Dorsolateral prefrontal cortex (tissue), 120 donors: ENCODE measurements at regions of chr4 and their contacts with region 1.

Region 1: DNA sequence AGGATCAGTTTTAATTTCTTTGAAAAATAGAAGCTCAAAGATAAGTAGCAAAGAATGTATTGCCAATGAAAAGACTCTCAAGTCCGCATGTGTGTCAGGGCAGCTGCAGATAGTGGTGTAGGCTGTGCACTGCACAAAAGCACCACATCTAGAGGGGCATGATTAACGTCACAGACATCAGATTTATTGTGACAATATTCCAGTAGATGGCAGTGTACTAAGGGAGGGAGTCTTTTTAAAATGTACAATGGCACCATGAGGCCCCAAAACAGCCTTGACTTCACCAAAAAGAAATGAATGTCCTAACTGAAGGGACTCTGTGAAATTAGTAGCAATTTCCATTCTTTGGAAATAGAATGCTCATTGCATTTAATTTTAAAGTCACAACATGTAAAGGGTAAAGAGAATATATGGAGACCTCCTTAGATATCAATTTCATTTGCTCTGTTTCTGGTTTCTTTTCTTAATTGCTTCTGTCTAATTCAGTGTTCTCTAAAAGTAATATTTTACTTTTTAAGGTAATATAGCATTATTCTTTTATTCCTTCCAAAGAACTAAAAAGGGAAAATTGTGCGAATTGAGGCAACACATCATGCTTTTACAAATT is 98.4 kb downstream of the ZNF827 start:
- DNase-seq: no peak
- H3K4me3 ChIP-seq: no peak overlapping the region
- H3K27ac ChIP-seq: peak overlapping the region in 16 of 59 donors; percentile 6 to 75 (median 54)
- H3K27me3 ChIP-seq: no peaks in the 10 kb centered on the region
- CTCF ChIP-seq: peak in 55 of 56 donors; percentile 11 to 74 (median 56)

Region 2: GRCh38 chr4:145881989-145882388 is 41.7 kb after region 1 on chr4:
- intact Hi-C with region 1: loop called in 1 of 2 experiments (anchors 5 kb)
- DNase-seq: peak in 1 of 10 donors; percentile 42
- H3K4me3 ChIP-seq: peak overlapping the region in 14 of 59 donors; percentile 6 to 40 (median 21)
- H3K27ac ChIP-seq: peak overlapping the region; percentile 58 to 97 (median 91)
- H3K27me3 ChIP-seq: no peaks in the 10 kb centered on the region
- CTCF ChIP-seq: no peak